CD4-positive, alpha-beta T cell (primary cell): ENCODE measurements at regions of chr12 and their contacts with region 1.

Region 1: GRCh38 chr12:55901881-55902490 is 25.7 kb downstream of the PYM1 start:
- DNase-seq: no peak
- ATAC-seq: no peak
- H3K4me3 ChIP-seq: no peak overlapping the region
- H3K4me3 Mint-ChIP-seq: no peak overlapping the region
- H3K27ac ChIP-seq: no peak overlapping the region
- H3K27ac Mint-ChIP-seq: no peak overlapping the region
- H3K4me1 ChIP-seq: no peaks in the 10 kb centered on the region
- H3K4me1 Mint-ChIP-seq: peaks cover 13% of the 10 kb centered on the region
- H3K27me3 ChIP-seq: no peaks in the 10 kb centered on the region
- H3K27me3 Mint-ChIP-seq: no peaks in the 10 kb centered on the region
- CTCF ChIP-seq: no peak

Region 2: GRCh38 chr12:55659486-55660385 is 242.2 kb before region 1 on chr12:
- CTCF ChIA-PET with region 1: no interaction called
- POLR2A ChIA-PET with region 1: no interaction called
- intact Hi-C with region 1: no loop called
- DNase-seq: peak in 1 of 14 experiments; percentile 20
- ATAC-seq: no peak
- H3K4me3 ChIP-seq: no peak overlapping the region
- H3K4me3 Mint-ChIP-seq: no peak overlapping the region
- H3K27ac ChIP-seq: no peak overlapping the region
- H3K27ac Mint-ChIP-seq: no peak overlapping the region
- H3K4me1 ChIP-seq: peaks cover 4% of the 10 kb centered on the region
- H3K4me1 Mint-ChIP-seq: no peaks in the 10 kb centered on the region
- H3K27me3 ChIP-seq: peaks cover 0 to 2% of the 10 kb centered on the region in 2 experiments
- H3K27me3 Mint-ChIP-seq: peaks cover 5% of the 10 kb centered on the region
- CTCF ChIP-seq: no peak

Region 3: GRCh38 chr12:55839345-55840140 is 62.4 kb before region 1 on chr12:
- CTCF ChIA-PET with region 1: no interaction called
- POLR2A ChIA-PET with region 1: no interaction called
- intact Hi-C with region 1: loop called in 1 of 2 experiments (anchors 5 kb)
- DNase-seq: no peak
- ATAC-seq: no peak
- H3K4me3 ChIP-seq: no peak overlapping the region
- H3K4me3 Mint-ChIP-seq: no peak overlapping the region
- H3K27ac ChIP-seq: no peak overlapping the region
- H3K27ac Mint-ChIP-seq: no peak overlapping the region
- H3K4me1 ChIP-seq: peaks cover 3% of the 10 kb centered on the region
- H3K4me1 Mint-ChIP-seq: peaks cover 14% of the 10 kb centered on the region
- H3K27me3 ChIP-seq: no peaks in the 10 kb centered on the region
- H3K27me3 Mint-ChIP-seq: no peaks in the 10 kb centered on the region
- CTCF ChIP-seq: no peak

Region 4: DNA sequence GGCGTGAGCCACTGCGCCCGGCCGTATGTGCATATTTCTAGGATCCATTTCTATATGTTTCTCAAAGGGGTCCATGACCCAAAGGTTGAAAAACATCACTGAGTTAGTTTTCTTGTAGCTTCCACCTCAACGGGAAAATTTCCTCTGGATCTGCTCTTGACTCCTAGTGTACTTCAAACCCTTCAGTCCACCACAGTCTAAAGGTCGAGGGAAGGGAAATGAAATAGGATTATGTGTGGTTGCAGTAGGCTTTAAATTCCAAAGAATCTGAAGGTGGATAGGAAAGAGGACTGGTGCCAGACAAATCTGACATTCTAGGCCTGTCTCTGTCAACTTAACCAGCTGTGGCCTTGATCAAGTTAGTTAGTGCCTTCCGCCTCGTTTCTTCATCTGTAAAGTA is 93.4 kb after region 1 on chr12:
- CTCF ChIA-PET with region 1: no interaction called
- POLR2A ChIA-PET with region 1: no interaction called
- intact Hi-C with region 1: no loop called
- DNase-seq: no peak
- ATAC-seq: no peak
- H3K4me3 ChIP-seq: no peak overlapping the region
- H3K4me3 Mint-ChIP-seq: no peak overlapping the region
- H3K27ac ChIP-seq: no peak overlapping the region
- H3K27ac Mint-ChIP-seq: no peak overlapping the region
- H3K4me1 ChIP-seq: peaks cover 17% of the 10 kb centered on the region
- H3K4me1 Mint-ChIP-seq: peaks cover 23% of the 10 kb centered on the region
- H3K27me3 ChIP-seq: peaks cover 5 to 12% of the 10 kb centered on the region in 2 experiments
- H3K27me3 Mint-ChIP-seq: peaks cover 20% of the 10 kb centered on the region
- CTCF ChIP-seq: no peak